Heart left ventricle (tissue), 16 donors: ENCODE measurements at regions of chr17 and their contacts with region 1.

Region 1: DNA sequence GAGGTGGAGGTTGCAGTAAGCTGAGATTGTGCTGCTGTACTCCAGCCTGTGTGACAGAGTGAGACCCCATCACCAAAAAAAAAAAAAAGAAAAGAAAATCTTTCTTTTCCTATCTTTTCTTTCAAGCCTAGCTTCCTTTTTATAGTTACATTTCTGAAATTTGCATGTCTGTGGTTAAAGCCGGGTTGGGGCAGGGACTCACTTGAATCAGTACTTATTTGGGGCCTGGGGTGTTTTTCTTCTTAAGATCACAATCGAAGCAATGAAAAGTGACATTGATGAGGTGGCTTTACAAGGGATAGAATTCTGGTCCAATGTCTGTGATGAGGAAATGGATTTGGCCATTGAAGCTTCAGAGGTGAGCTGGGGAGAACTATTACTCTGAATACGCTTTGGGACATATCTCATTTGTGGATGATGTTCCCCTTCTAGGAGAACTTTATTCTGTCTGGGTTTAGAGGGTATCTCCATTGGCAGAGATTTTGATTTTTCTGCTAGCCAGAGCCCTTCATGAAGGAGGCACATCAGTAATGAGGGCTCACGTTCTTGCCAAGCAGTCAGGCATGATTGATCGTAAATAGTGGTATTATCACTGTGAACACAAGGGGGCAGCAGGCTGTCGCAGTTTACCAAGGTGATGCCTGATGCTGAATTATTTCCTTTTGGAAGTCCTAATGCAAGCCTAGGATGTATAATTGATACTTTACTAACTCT is 14.3 kb downstream of the KPNB1 start:
- DNase-seq: peak in 4 of 5 donors; percentile 27 to 48 (median 40)
- ATAC-seq: peak in 3 of 4 donors; percentile 61 to 70 (median 69)
- H3K4me3 ChIP-seq: no peak overlapping the region
- H3K27ac ChIP-seq: no peak overlapping the region
- H3K4me1 ChIP-seq: peaks cover 0 to 35% (median 0%) of the 10 kb centered on the region in 12 donors
- H3K27me3 ChIP-seq: no peaks in the 10 kb centered on the region
- CTCF ChIP-seq: peak; percentile 61 to 83 (median 74)
- POLR2A ChIP-seq: no peak

Region 2: GRCh38 chr17:47611372-47612350 is 52.4 kb before region 1 on chr17:
- intact Hi-C with region 1: no loop called
- DNase-seq: no peak
- ATAC-seq: no peak
- H3K4me3 ChIP-seq: no peak overlapping the region
- H3K27ac ChIP-seq: no peak overlapping the region
- H3K4me1 ChIP-seq: peaks cover 0 to 7% (median 0%) of the 10 kb centered on the region in 12 donors
- H3K27me3 ChIP-seq: no peaks in the 10 kb centered on the region
- CTCF ChIP-seq: no peak
- POLR2A ChIP-seq: no peak

Region 3: GRCh38 chr17:47733047-47733673 is 69.1 kb after region 1 on chr17 and contains the start of gene TBX21:
- intact Hi-C with region 1: loop called in 1 of 10 experiments (anchors 10 kb)
- DNase-seq: peak; percentile 54 to 85 (median 66)
- ATAC-seq: peak in 3 of 4 donors; percentile 75 to 84 (median 77)
- H3K4me3 ChIP-seq: peak within 1 kb of the TSS; percentile 23 to 62 (median 48)
- H3K27ac ChIP-seq: peak within 1 kb of the TSS in 1 of 12 donors; percentile 71
- H3K4me1 ChIP-seq: peaks cover 0 to 19% (median 8%) of the 10 kb centered on the region in 12 donors
- H3K27me3 ChIP-seq: peaks cover 12 to 65% (median 40%) of the 10 kb centered on the region in 9 donors
- CTCF ChIP-seq: peak in 5 of 12 donors; percentile 7 to 38 (median 27)
- POLR2A ChIP-seq: no peak
- total RNA-seq, gene TBX21: 0.09 to 3.2 (median 0.28) TPM in 7 of 9 donors, not detected in the others

Region 4: GRCh38 chr17:47789611-47790561 is 125.8 kb after region 1 on chr17:
- intact Hi-C with region 1: loop called in 1 of 10 experiments (anchors 10 kb)
- DNase-seq: peak in 4 of 5 donors; percentile 35 to 79 (median 61)
- ATAC-seq: peak; percentile 42 to 95 (median 89)
- H3K4me3 ChIP-seq: peak overlapping the region in 11 of 12 donors; percentile 32 to 51 (median 42)
- H3K27ac ChIP-seq: no peak overlapping the region
- H3K4me1 ChIP-seq: peaks cover 0 to 10% (median 5%) of the 10 kb centered on the region in 12 donors
- H3K27me3 ChIP-seq: peaks cover 17 to 95% (median 65%) of the 10 kb centered on the region in 9 donors
- CTCF ChIP-seq: peak; percentile 30 to 66 (median 48)
- POLR2A ChIP-seq: no peak

Region 5: DNA sequence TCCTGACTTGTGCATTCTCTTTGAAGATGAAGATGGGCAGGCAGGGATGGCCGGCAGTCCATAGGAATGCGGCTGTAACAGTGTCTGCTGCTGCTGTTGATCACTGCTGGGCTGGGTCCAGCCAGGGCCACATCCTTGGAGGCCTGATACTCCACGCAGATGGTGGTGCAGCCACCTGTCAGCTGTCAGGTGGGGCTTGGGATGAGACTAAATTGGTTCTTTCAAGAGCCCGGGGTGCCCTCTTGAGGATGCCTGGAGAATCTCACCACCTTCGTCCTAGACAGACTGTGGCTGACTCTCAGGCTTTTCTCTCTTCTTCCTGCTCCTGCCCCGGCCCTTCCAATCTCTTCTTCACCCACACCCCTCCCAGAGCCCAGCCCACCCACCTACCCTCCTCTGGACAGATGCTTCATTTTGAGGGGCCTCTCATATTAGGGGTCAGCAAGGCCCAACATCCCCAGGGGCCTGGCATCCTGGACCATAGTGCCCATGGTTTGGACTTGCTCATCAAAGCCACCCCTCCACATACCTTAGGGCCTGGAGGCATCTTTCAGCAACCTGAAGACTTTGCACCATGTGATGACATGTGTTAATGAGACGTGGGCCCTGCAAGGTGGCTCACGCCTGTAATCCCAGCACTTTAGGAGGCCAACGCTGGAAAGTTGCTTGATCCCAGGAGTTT is 138.4 kb after region 1 on chr17:
- intact Hi-C with region 1: loop called in 5 of 10 experiments (anchors 5 to 10 kb)
- DNase-seq: no peak
- ATAC-seq: peak; percentile 55 to 60 (median 58)
- H3K4me3 ChIP-seq: no peak overlapping the region
- H3K27ac ChIP-seq: no peak overlapping the region
- H3K4me1 ChIP-seq: peaks cover 0 to 10% (median 0%) of the 10 kb centered on the region in 12 donors
- H3K27me3 ChIP-seq: peaks cover 0 to 6% (median 0%) of the 10 kb centered on the region in 9 donors
- CTCF ChIP-seq: peak; percentile 27 to 60 (median 50)
- POLR2A ChIP-seq: no peak

Region 6: GRCh38 chr17:47864770-47865216 is 200.7 kb after region 1 on chr17:
- intact Hi-C with region 1: no loop called
- DNase-seq: no peak
- ATAC-seq: no peak
- H3K4me3 ChIP-seq: no peak overlapping the region
- H3K27ac ChIP-seq: no peak overlapping the region
- H3K4me1 ChIP-seq: no peaks in the 10 kb centered on the region
- H3K27me3 ChIP-seq: peaks cover 0 to 20% (median 0%) of the 10 kb centered on the region in 9 donors
- CTCF ChIP-seq: no peak
- POLR2A ChIP-seq: no peak